PC-9 (cell line): ENCODE measurements at regions of chr19 and their contacts with region 1.

Region 1: GRCh38 chr19:56567274-56568120 is at the start of gene ZNF470:
- DNase-seq: peak; percentile 83 to 95
- H3K4me3 ChIP-seq: peak within 1 kb of the TSS; percentile 79
- H3K27ac ChIP-seq: no peak within 1 kb of the TSS
- H3K4me1 ChIP-seq: no peaks in the 10 kb centered on the region
- H3K27me3 ChIP-seq: no peaks in the 10 kb centered on the region
- CTCF ChIP-seq: no peak
- total RNA-seq, gene ZNF470: 1.2 and 1.7 TPM in 2 replicates

Region 2: DNA sequence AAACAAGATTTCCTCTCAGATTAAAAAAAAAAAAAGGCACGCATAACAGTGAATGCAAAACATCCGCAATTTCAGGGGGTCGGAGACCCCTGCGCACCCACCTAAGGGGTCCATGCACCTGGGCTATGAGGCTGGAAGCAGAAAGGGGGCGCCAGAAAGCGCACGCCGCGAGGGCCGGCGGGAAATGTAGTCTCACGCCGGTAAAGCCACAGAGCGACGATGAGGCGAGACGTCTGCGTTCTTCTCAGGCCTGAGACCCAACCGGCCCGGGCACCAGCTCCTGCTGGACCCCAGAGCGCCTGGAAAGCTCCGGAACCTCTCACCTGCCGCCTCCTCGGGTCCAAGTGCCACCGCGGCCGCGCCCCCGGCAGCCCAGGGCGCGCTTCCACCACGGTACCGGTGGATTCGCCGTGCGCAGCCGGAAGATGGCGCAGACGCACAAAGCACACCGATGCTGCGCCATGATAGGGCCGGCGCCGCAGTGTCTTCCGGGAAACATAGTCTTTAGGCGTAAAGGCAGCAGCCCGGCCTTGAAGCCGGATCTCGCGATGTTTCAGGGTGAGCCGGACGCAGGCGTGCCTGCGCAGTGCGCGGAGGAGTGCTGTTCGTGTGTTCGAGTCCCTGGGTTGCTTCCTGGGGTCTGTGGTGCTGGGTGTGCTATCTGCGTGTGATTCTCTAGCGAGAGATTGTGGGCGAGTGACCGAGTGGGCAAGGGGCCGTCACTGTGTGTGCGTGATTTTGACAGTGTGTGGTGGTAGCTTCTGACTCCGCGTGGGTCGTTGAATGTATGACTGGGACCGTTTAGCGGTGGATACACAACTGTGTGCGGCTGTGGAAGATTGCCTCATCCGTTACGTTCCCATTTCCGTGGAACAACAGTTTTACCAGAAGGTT is 174.1 kb before region 1 on chr19 and contains the start of gene ZNF582:
- CTCF ChIA-PET with region 1: no interaction called
- POLR2A ChIA-PET with region 1: no interaction called
- intact Hi-C with region 1: no loop called
- DNase-seq: peak; percentile 86 to 89
- H3K4me3 ChIP-seq: peak within 1 kb of the TSS; percentile 70
- H3K27ac ChIP-seq: peak within 1 kb of the TSS; percentile 50
- H3K4me1 ChIP-seq: 0 out of 2 replicates have a peak, but pooled peaks cover 9% of the 10 kb centered on the region
- H3K27me3 ChIP-seq: no peaks in the 10 kb centered on the region
- CTCF ChIP-seq: peak; percentile 89
- total RNA-seq, gene ZNF582: 1.8 and 3.4 TPM in 2 replicates

Region 3: DNA sequence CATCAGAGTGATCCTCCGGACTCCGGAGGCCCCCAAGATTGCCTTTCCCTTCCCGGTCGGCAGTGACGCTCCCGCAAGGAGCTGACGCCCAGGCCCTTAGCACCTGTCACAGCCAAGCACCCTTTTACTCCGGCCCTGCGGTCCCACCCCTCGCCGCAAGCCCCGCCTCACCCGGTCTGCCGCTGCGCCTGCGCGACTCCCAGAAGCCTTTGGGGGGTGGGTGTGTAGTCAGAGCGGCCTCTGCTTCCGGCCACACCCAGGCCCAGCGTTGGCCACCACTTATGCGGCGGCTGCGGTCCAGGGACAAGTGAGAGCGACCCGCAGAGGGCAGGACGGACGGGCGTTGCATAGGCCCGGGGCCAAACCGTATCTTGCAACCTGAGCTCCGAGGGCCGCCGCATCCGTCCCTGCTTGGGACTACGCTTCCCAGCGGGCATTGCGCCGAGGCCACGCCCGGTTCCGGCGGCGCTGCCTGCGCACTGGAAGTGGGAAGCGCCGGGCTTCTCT is 29.2 kb before region 1 on chr19:
- CTCF ChIA-PET with region 1: no interaction called
- POLR2A ChIA-PET with region 1: no interaction called
- intact Hi-C with region 1: loop called (anchors 1 kb)
- DNase-seq: peak; percentile 81 to 86
- H3K4me3 ChIP-seq: peak overlapping the region; percentile 87
- H3K27ac ChIP-seq: peak overlapping the region; percentile 43; the same call in 1 of the 2 replicates
- H3K4me1 ChIP-seq: 0 out of 2 replicates have a peak, but pooled peaks cover 9% of the 10 kb centered on the region
- H3K27me3 ChIP-seq: no peaks in the 10 kb centered on the region
- CTCF ChIP-seq: no peak